Mucosa of descending colon (tissue), 3 donors: ENCODE measurements at regions of chr6 and their contacts with region 1.

Region 1: DNA sequence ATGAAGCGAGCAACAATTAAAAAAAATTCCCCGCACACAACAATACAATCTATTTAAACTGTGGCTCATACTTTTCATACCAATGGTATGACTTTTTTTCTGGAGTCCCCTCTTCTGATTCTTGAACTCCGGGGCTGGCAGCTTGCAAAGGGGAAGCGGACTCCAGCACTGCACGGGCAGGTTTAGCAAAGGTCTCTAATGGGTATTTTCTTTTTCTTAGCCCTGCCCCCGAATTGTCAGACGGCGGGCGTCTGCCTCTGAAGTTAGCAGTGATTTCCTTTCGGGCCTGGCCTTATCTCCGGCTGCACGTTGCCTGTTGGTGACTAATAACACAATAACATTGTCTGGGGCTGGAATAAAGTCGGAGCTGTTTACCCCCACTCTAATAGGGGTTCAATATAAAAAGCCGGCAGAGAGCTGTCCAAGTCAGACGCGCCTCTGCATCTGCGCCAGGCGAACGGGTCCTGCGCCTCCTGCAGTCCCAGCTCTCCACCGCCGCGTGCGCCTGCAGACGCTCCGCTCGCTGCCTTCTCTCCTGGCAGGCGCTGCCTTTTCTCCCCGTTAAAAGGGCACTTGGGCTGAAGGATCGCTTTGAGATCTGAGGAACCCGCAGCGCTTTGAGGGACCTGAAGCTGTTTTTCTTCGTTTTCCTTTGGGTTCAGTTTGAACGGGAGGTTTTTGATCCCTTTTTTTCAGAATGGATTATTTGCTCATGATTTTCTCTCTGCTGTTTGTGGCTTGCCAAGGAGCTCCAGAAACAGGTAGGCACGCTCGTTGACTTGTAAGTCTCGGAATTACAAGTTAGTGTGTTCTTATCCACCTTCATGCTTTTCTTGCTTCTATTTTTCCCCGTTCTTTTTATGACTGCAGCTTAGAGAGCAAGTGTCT is at the start of gene EDN1:
- DNase-seq: peak; percentile 84 to 87 (median 85)
- ATAC-seq: peak; percentile 81
- H3K4me3 ChIP-seq: peak within 1 kb of the TSS; percentile 4
- H3K4me1 ChIP-seq: peaks cover 13% of the 10 kb centered on the region
- CTCF ChIP-seq: peak; percentile 46
- total RNA-seq, gene EDN1: 8.4 to 26.5 (median 14.0) TPM

Region 2: GRCh38 chr6:11653028-11653583 is 637.1 kb before region 1 on chr6:
- intact Hi-C with region 1: loop called in 1 of 2 experiments (anchors 5 kb)
- DNase-seq: peak in 1 of 3 donors; percentile 9
- ATAC-seq: peak; percentile 34
- H3K4me3 ChIP-seq: no peak overlapping the region
- H3K4me1 ChIP-seq: peaks cover 3% of the 10 kb centered on the region
- CTCF ChIP-seq: no peak

Region 3: GRCh38 chr6:11869672-11870340 is 420.4 kb before region 1 on chr6:
- intact Hi-C with region 1: no loop called
- DNase-seq: peak in 1 of 3 donors; percentile 24
- ATAC-seq: no peak
- H3K4me3 ChIP-seq: no peak overlapping the region
- H3K4me1 ChIP-seq: no peaks in the 10 kb centered on the region
- CTCF ChIP-seq: no peak

Region 4: DNA sequence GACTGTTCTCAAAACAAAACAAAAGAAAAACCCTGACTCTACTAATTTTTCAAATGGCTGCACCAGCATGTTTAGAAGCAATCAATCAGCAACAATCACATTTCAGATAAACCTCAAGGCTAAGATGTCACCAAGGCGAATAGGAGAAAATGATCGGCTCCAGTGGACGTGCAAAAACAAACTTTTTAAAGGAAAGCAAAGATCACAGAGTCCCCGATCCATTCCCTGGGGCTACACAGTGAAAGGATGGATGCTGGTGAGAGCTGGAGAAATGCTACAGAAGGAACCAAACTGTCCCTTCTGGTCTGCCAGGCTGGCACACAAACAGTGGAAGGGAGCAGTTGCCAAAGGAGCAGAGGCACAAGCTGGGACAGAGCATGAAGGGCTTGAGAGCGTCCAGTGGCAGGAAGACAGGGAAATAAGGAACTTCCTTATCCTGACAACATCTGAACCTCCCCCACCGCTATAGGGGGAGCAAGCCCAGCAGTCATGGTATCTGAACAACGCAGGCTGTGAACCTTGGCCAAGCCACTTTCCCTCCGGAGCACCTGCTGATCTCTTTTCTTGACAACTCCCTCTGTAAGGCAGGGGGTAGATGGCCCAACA is 351.8 kb before region 1 on chr6:
- intact Hi-C with region 1: no loop called
- DNase-seq: peak in 2 of 3 donors; percentile 47 to 49
- ATAC-seq: peak; percentile 93
- H3K4me3 ChIP-seq: no peak overlapping the region
- H3K4me1 ChIP-seq: no peaks in the 10 kb centered on the region
- CTCF ChIP-seq: no peak

Region 5: GRCh38 chr6:12506159-12506558 is 216.0 kb after region 1 on chr6:
- intact Hi-C with region 1: loop called in 1 of 2 experiments (anchors 5 kb)
- DNase-seq: no peak
- ATAC-seq: no peak
- H3K4me3 ChIP-seq: no peak overlapping the region
- H3K4me1 ChIP-seq: no peaks in the 10 kb centered on the region
- CTCF ChIP-seq: no peak

Region 6: GRCh38 chr6:12605888-12606345 is 315.7 kb after region 1 on chr6:
- intact Hi-C with region 1: loop called in 1 of 2 experiments (anchors 10 kb)
- DNase-seq: peak in 1 of 3 donors; percentile 85
- ATAC-seq: peak; percentile 86
- H3K4me3 ChIP-seq: no peak overlapping the region
- H3K4me1 ChIP-seq: no peaks in the 10 kb centered on the region
- CTCF ChIP-seq: no peak